Panc1 (cell line): ENCODE measurements at regions of chr12 and their contacts with region 1.

Region 1: DNA sequence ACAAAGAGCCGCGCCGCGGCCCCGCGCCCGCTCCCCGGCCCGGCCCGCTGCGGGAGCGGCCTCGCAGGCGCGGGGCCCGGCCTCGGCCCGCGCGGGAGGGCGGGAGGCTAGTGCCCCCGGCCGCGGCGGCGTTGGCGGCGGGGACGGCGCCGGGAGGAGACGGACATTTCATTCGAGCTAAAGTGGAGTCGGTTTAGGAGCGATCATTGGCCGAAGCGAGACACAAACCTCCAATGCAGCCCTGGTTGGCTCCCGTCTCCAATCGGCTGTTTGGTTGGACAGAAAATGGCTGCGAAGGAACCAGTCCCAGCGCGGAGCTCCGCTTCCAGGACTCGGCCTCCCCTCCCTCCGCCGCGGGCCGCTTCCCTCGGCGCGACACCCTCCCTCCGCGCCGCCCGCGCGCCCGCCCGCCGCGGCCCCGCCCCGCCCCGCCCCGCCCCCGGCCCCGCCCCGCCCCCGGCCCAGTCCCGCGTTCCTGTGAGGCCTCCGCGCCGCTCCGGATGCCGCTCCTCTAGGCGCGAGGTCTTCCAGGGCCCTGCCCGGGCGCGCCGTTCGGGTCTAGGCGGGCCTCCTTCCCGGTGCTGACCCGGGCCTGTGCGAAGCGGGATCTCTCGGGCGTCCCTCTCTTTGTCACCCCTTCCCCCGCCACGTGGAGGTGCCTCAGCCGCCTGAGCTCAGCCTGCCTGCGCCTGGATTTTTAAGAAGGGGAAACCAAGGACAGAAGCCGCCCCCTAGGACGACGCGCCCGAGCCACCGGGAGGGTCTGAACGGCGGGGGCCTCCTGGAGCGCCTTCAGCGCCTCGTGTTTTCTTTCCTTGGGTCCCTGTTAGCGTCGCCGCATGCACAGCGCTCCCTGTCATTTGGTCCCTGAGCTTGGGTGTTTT is at the start of gene NFYB:
- DNase-seq: peak; percentile 42
- ATAC-seq: peak; percentile 98
- H3K4me3 ChIP-seq: peak within 1 kb of the TSS; percentile 66 to 82
- H3K27ac ChIP-seq: peak within 1 kb of the TSS; percentile 89
- H3K4me1 ChIP-seq: peaks cover 24% of the 10 kb centered on the region
- H3K27me3 ChIP-seq: no peaks in the 10 kb centered on the region; the same call in 1 of the 2 replicates
- CTCF ChIP-seq: no peak
- total RNA-seq, gene NFYB: 31.5 TPM

Region 2: DNA sequence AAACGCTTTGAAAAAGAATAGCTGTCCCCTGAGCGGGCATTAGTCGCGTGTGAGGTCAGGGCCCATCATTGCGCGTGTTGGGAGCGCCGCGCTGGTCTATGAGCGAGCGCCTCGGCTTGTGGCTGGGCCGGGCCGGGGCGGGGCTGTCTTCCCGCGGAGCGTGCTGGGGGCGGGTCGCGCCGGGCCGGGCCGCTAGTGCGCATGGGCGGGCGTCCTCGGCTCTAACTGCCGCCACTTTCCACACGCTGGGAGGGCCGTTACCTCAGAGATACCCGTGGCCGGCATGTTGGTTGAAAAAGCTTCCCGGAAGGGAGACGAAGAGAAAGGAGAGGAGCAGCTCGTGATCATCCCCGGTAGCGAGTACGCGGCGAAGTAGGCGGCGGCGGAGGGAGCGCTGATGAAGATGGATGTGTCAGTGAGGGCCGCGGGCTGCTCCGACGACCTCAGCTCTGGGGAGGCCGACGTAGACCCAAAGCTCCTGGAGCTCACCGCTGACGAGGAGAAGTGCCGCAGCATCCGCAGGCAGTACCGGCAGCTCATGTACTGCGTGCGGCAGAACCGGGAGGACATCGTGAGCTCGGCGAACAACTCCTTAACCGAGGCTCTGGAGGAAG is 165.5 kb after region 1 on chr12 and contains the start of gene EID3:
- CTCF ChIA-PET with region 1: no interaction called
- POLR2A ChIA-PET with region 1: interaction called, 3 read pairs
- in situ Hi-C with region 1: no loop called
- intact Hi-C with region 1: loop called (anchors 10 kb)
- DNase-seq: no peak
- ATAC-seq: peak; percentile 86
- H3K4me3 ChIP-seq: peak within 1 kb of the TSS; percentile 57 to 73
- H3K27ac ChIP-seq: peak within 1 kb of the TSS; percentile 96
- H3K4me1 ChIP-seq: peaks cover 65% of the 10 kb centered on the region
- H3K27me3 ChIP-seq: no peaks in the 10 kb centered on the region
- CTCF ChIP-seq: no peak
- total RNA-seq, gene EID3: 18.5 TPM